RWPE1 (cell line): ENCODE measurements at regions of chr5 and their contacts with region 1.

Region 1: GRCh38 chr5:54852007-54852406 is 133.4 kb downstream of the ESM1 start:
- DNase-seq: no peak
- H3K27ac ChIP-seq: no peak overlapping the region
- CTCF ChIP-seq: no peak

Region 2: DNA sequence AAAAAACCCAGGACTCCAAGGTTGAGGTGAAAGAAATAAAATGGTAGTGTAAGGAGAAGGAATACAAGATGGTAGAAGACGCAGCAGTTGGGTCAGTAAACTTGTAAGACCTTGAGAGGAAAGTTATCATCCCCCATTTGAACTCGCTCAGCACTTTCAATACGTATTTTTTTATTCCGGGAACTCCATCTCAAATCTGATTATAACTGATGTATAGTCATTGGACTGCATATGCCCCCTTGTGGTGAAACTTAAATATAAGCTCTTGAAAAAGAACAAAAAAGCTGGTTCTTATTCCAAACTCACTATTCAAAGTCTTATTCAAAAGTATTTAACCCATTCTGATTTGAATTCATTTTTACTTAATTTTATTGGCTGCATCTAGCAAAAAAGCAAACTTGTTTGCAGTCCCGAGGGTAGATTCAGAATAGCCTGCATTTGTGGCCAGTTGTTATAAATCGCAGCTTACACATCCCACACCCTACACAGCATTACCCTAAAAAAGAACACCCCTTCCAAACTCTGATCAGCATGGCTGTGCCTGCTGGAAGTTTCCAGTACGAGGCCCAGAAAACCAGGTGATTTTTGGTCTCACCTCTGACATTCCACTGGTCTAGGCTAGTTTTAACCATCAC is 15.4 kb after region 1 on chr5:
- CTCF ChIA-PET with region 1: interaction called, 11 read pairs
- POLR2A ChIA-PET with region 1: no interaction called
- DNase-seq: peak; percentile 66
- H3K27ac ChIP-seq: no peak overlapping the region
- CTCF ChIP-seq: peak; percentile 83